ENCODE measurements at regions of chr4 and their contacts with region 1.

Region 1: GRCh38 chr4:143025081-143025704 is 159.5 kb upstream of the USP38 start:
- DNase-seq: no peak
- ATAC-seq: no peak

Region 2: DNA sequence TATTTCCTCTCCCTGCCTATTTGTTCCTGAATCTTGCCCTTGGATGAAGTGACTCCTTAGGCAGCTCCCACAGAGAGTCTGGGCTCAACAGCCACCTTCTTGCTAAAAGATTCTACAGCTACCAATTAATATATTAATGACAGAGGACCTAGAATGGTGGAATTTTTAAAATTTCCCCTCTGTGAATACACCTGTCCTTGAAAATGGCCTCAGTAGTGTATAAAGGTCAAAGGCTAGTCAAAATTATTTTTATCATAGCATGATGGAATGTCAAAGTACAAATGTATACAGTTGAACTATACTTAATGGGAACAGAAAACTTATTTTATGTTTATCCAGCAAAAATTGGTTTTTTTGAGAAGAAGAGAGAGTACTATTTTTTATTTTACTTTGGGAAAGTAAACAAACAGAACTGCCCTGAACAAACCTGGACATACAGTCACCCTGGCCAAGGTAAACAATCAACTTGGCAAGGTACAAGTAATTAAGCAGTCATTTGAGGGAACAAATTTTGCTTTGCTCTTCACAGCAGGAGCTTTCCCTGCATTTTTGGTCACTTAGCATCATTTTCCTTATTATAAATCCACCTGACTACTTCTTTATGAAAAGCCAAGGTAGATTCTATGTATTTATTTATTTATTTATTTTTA is 429.8 kb before region 1 on chr4:
- intact Hi-C with region 1: no loop called
- DNase-seq: no peak
- ATAC-seq: no peak

Region 3: GRCh38 chr4:142846729-142847596 is 178.2 kb before region 1 on chr4:
- intact Hi-C with region 1: no loop called
- DNase-seq: no peak
- ATAC-seq: peak; percentile 70

Region 4: DNA sequence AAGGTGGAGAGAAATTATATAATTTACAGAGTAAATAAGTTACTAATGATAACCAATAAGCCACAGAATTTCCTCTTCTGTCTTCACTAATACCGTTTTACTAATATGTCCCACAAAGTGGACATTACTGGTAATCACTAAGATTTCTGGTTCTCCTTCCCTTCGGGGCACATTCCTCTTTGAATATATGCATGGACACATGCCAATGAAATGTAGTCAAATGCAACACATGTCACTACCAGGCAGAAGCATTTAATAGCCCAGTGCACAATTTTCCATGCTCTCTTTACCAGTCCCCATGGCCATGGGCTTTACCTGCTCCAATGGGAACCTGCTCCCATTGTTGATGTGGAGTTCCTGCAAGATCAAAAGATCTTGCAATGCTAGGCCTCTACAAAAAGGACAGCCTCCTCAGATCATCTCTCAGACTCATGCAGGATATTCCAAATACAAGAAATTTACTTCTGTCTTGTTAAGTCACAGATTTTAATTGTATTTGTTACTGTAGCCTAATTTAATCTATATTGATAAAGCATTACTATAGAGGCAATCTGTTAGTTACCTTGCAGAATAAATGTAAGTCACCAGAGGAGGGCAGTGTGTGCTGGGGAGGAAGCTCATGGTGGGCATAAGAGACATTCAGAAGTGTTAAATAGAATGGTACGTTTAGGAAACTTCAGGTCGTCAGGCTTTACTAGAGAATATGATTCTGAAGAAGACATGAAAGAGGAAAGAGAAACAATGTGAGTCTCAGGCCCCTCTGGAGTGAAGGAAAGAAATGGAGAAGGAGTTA is 142.0 kb before region 1 on chr4:
- intact Hi-C with region 1: loop called (anchors 1 kb)
- DNase-seq: no peak
- ATAC-seq: no peak

Region 5: GRCh38 chr4:142961866-142962265 is 63.3 kb before region 1 on chr4:
- intact Hi-C with region 1: no loop called
- DNase-seq: no peak
- ATAC-seq: peak; percentile 79

Measured in Right ventricle myocardium inferior (tissue), 1 donor.